ENCODE measurements at regions of chr5 and their contacts with region 1.

Region 1: DNA sequence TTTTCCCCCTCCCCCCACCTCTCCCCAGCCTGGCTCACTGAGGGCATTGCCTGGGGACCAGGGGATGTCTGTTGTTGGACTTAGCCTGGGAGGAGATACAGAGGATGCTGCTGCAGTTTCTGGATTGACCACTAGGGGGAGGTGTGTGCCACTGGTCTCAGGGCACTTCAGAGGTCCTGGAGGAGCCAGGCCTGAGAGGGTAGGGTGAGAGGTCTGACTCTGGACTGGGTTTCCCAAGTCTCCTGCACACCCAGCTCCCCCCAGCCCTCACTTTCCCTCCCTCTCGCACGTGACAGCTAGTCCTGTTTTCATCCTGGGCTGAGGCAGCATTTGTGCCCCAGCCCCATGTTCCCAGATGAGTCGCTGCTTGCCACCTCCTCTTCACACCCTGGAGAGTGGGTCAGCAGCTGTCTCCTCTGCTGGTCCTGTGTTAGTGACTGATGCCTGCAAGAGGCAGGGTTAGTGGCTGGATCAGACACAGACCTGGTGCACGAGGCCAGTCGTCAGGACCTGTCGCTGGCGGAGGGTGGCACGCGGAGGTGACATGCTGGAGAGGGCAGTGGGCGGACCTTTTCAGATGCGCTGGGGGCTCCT is 4.4 kb downstream of the IL3 start:
- DNase-seq: peak; percentile 88
- H3K4me3 Mint-ChIP-seq: no peak overlapping the region
- H3K27ac Mint-ChIP-seq: no peak overlapping the region
- H3K4me1 Mint-ChIP-seq: peaks cover 5% of the 10 kb centered on the region
- H3K27me3 Mint-ChIP-seq: no peaks in the 10 kb centered on the region
- CTCF ChIP-seq: peak; percentile 97

Region 2: GRCh38 chr5:131810510-131811249 is 254.2 kb before region 1 on chr5:
- CTCF ChIA-PET with region 1: interaction called, 22 read pairs
- POLR2A ChIA-PET with region 1: no interaction called
- intact Hi-C with region 1: loop called (anchors 1 kb)
- DNase-seq: peak; percentile 40
- H3K4me3 Mint-ChIP-seq: no peak overlapping the region
- H3K27ac Mint-ChIP-seq: no peak overlapping the region
- H3K4me1 Mint-ChIP-seq: peaks cover 13% of the 10 kb centered on the region
- H3K27me3 Mint-ChIP-seq: no peaks in the 10 kb centered on the region
- CTCF ChIP-seq: peak; percentile 63

Region 3: GRCh38 chr5:131932235-131932634 is 132.6 kb before region 1 on chr5:
- CTCF ChIA-PET with region 1: no interaction called
- POLR2A ChIA-PET with region 1: no interaction called
- intact Hi-C with region 1: no loop called
- DNase-seq: no peak
- H3K4me3 Mint-ChIP-seq: no peak overlapping the region
- H3K27ac Mint-ChIP-seq: no peak overlapping the region
- H3K4me1 Mint-ChIP-seq: no peaks in the 10 kb centered on the region
- H3K27me3 Mint-ChIP-seq: peaks cover 82% of the 10 kb centered on the region
- CTCF ChIP-seq: no peak

Region 4: GRCh38 chr5:131952301-131952857 is 112.5 kb before region 1 on chr5:
- CTCF ChIA-PET with region 1: no interaction called
- POLR2A ChIA-PET with region 1: no interaction called
- intact Hi-C with region 1: no loop called
- DNase-seq: peak; percentile 7
- H3K4me3 Mint-ChIP-seq: no peak overlapping the region
- H3K27ac Mint-ChIP-seq: no peak overlapping the region
- H3K4me1 Mint-ChIP-seq: no peaks in the 10 kb centered on the region
- H3K27me3 Mint-ChIP-seq: peaks cover 45% of the 10 kb centered on the region
- CTCF ChIP-seq: no peak

Region 5: DNA sequence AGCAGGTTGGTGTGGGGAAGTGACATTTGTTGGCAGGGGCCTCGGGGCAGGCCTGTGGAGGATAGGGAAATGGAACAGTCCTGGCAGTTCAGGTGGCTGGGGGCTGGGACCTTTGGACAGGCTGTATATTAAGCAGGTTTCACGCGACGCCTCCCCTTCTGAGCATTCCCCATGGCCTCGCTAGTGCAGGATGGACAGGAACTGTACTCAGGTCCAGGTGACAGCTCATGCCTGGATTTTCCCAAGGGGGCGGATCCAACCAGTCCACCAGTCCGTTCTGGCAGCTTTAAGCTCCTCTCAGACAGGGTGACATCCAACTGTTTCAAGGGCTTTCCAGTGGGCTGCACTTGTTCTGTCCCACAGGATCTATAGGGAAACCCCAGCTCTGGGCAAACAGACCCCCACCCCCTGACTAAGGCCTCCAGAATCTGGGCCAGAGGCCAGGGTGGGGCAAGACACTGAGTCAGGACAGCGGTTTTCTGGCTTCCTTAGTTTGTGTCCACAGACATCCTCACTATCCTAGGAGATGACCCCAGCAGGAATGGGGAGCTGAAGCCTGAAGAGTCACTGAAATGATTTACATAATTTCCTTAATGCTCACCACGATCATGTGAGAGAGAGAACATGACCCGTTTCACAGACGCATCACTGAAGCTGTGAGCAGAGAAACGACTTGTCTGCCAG is 29.7 kb after region 1 on chr5:
- CTCF ChIA-PET with region 1: interaction called, 32 read pairs
- POLR2A ChIA-PET with region 1: no interaction called
- intact Hi-C with region 1: loop called (anchors 2 kb)
- DNase-seq: peak; percentile 90
- H3K4me3 Mint-ChIP-seq: no peak overlapping the region
- H3K27ac Mint-ChIP-seq: peak overlapping the region; percentile 6
- H3K4me1 Mint-ChIP-seq: peaks cover 39% of the 10 kb centered on the region
- H3K27me3 Mint-ChIP-seq: no peaks in the 10 kb centered on the region
- CTCF ChIP-seq: no peak

Region 6: GRCh38 chr5:132199116-132199680 is 134.4 kb after region 1 on chr5:
- CTCF ChIA-PET with region 1: interaction called, 17 read pairs
- POLR2A ChIA-PET with region 1: no interaction called
- intact Hi-C with region 1: no loop called
- DNase-seq: no peak
- H3K4me3 Mint-ChIP-seq: no peak overlapping the region
- H3K27ac Mint-ChIP-seq: no peak overlapping the region
- H3K4me1 Mint-ChIP-seq: no peaks in the 10 kb centered on the region
- H3K27me3 Mint-ChIP-seq: no peaks in the 10 kb centered on the region
- CTCF ChIP-seq: no peak

Region 7: DNA sequence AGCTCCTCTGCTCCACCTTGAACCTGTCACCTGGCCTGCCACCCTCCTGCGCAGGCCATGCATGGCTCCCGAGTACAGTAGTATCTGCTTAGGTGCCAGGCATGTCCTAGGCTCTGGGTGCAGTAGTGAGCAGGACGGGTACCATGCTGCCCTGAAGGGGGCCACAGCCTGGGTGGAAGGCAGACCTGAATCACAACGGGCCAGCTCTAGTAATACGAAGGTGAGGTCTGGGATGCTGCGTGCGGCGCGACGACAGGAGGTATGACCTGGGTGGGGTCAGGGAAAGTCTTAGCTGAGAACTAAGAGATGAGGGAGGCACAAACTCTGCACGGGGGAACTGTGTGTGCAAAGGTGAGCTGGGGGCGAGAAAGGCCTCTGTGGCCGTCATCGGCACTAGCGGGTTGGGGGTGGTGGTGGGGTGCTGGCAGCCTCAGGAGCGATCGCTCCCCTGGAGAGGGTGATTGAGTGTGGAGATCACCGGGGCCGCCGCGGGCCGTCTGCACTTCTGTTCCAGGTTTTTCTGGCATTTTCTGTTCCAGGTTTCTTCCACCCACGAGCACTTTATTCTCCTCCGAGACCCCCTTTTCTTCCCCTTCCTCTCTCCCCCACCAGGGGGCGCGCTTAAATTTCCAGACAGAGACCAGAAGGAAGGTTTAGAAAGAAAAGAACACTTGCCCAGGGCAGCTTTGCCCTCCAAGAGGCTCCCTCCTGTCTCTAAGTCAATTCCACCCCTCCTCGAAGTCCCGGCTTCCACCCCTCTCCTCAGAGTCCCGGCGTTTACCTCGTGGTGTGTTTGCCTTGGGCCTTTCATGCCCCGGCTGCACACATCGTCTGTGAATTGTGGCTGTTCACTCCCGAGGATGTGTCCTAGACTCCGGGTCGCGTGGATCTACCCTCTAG is 207.7 kb after region 1 on chr5:
- CTCF ChIA-PET with region 1: no interaction called
- POLR2A ChIA-PET with region 1: no interaction called
- intact Hi-C with region 1: loop called (anchors 2 kb)
- DNase-seq: peak; percentile 68
- H3K4me3 Mint-ChIP-seq: no peak overlapping the region
- H3K27ac Mint-ChIP-seq: no peak overlapping the region
- H3K4me1 Mint-ChIP-seq: peaks cover 2% of the 10 kb centered on the region
- H3K27me3 Mint-ChIP-seq: no peaks in the 10 kb centered on the region
- CTCF ChIP-seq: peak; percentile 96

Region 8: DNA sequence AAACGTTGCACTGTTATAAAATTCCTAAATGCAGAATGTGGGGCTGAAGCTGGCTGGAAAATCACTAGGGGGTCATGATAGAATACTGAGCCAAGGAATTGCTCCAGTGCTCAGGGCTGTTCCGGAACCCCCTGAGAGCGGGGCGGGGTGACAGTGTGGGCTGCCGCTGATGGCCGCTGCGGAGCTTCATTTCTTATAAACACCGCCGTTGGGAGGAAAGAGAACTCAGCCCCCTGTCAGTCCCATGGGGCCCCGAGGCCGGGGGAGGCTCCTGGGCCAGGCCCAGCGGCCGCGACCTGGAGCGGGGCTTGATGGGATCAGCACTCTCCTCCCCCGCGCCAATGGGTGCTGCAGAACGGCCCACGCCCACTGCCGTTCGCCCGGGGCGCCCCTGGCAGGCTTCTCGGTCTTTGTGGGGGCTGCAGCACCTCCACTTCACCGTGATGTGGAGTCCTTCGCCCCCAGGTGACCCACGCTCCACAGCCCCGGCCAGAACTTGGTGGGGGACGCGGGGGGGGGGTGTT is 430.9 kb after region 1 on chr5:
- CTCF ChIA-PET with region 1: interaction called, 15 read pairs
- POLR2A ChIA-PET with region 1: no interaction called
- intact Hi-C with region 1: no loop called
- DNase-seq: peak; percentile 92
- H3K4me3 Mint-ChIP-seq: peak overlapping the region; percentile 80
- H3K27ac Mint-ChIP-seq: peak overlapping the region; percentile 34
- H3K4me1 Mint-ChIP-seq: peaks cover 47% of the 10 kb centered on the region
- H3K27me3 Mint-ChIP-seq: no peaks in the 10 kb centered on the region
- CTCF ChIP-seq: no peak

Measured in MCF 10A (cell line).